ENCODE measurements at regions of chr15 and their contacts with region 1.

Region 1: GRCh38 chr15:79028411-79028964 is 62.1 kb downstream of the RASGRF1 start:
- DNase-seq: peak in 37 of 42 donors; percentile 16 to 85 (median 63)

Region 2: GRCh38 chr15:79184465-79184892 is 156.0 kb after region 1 on chr15:
- intact Hi-C with region 1: loop called (anchors 1 kb)
- DNase-seq: peak; percentile 45 to 93 (median 84)

Measured in head of caudate nucleus (tissue), 42 donors.